Testis (tissue), 5 donors: ENCODE measurements at regions of chr9 and their contacts with region 1.

Region 1: GRCh38 chr9:37903647-37904444 is at the start of gene SLC25A51:
- DNase-seq: peak; percentile 95
- H3K4me3 ChIP-seq: peak within 1 kb of the TSS; percentile 86 to 98
- H3K27ac ChIP-seq: peak within 1 kb of the TSS; percentile 89 to 90
- H3K4me1 ChIP-seq: peaks cover 5% of the 10 kb centered on the region
- H3K27me3 ChIP-seq: no peaks in the 10 kb centered on the region
- CTCF ChIP-seq: peak; percentile 84 to 98 (median 98)
- POLR2A ChIP-seq: no peak
- total RNA-seq, gene SLC25A51: 19.1 to 27.4 TPM

Region 2: GRCh38 chr9:38392235-38393127 is 488.6 kb after region 1 on chr9 and contains the start of gene ALDH1B1:
- intact Hi-C with region 1: loop called (anchors 10 kb)
- DNase-seq: peak; percentile 91
- H3K4me3 ChIP-seq: peak within 1 kb of the TSS; percentile 59 to 74
- H3K27ac ChIP-seq: peak within 1 kb of the TSS; percentile 42 to 52
- H3K4me1 ChIP-seq: peaks cover 24% of the 10 kb centered on the region
- H3K27me3 ChIP-seq: no peaks in the 10 kb centered on the region
- CTCF ChIP-seq: no peak
- POLR2A ChIP-seq: no peak
- total RNA-seq, gene ALDH1B1: 42.4 to 71.7 TPM